ENCODE measurements at regions of chr2 and their contacts with region 1.

Region 1: GRCh38 chr2:186485871-186486650 is at the start of gene ZC3H15:
- DNase-seq: peak; percentile 97
- H3K4me3 ChIP-seq: peak within 1 kb of the TSS; percentile 71 to 98 (median 84)
- H3K27ac ChIP-seq: peak within 1 kb of the TSS; percentile 89
- H3K4me1 ChIP-seq: peaks cover 19% of the 10 kb centered on the region
- H3K27me3 ChIP-seq: no peaks in the 10 kb centered on the region
- CTCF ChIP-seq: no peak
- POLR2A ChIP-seq: peak; percentile 95
- total RNA-seq, gene ZC3H15: 64.5 and 65.1 TPM in 2 replicates

Region 2: GRCh38 chr2:186129767-186130581 is 356.1 kb before region 1 on chr2:
- CTCF ChIA-PET with region 1: no interaction called
- POLR2A ChIA-PET with region 1: no interaction called
- dilution Hi-C with region 1: no loop called
- intact Hi-C with region 1: loop called (anchors 5 kb)
- DNase-seq: peak; percentile 90
- H3K4me3 ChIP-seq: no peak overlapping the region
- H3K27ac ChIP-seq: peak overlapping the region; percentile 75
- H3K4me1 ChIP-seq: peaks cover 29% of the 10 kb centered on the region
- H3K27me3 ChIP-seq: no peaks in the 10 kb centered on the region
- CTCF ChIP-seq: no peak
- POLR2A ChIP-seq: no peak

Region 3: GRCh38 chr2:186205254-186205911 is 280.7 kb before region 1 on chr2:
- CTCF ChIA-PET with region 1: no interaction called
- POLR2A ChIA-PET with region 1: no interaction called
- dilution Hi-C with region 1: no loop called
- intact Hi-C with region 1: no loop called
- DNase-seq: no peak
- H3K4me3 ChIP-seq: no peak overlapping the region
- H3K27ac ChIP-seq: no peak overlapping the region
- H3K4me1 ChIP-seq: no peaks in the 10 kb centered on the region
- H3K27me3 ChIP-seq: no peaks in the 10 kb centered on the region
- CTCF ChIP-seq: no peak
- POLR2A ChIP-seq: no peak

Region 4: GRCh38 chr2:186399082-186399644 is 86.9 kb before region 1 on chr2:
- CTCF ChIA-PET with region 1: no interaction called
- POLR2A ChIA-PET with region 1: no interaction called
- dilution Hi-C with region 1: no loop called
- intact Hi-C with region 1: no loop called
- DNase-seq: no peak
- H3K4me3 ChIP-seq: no peak overlapping the region
- H3K27ac ChIP-seq: no peak overlapping the region
- H3K4me1 ChIP-seq: no peaks in the 10 kb centered on the region
- H3K27me3 ChIP-seq: no peaks in the 10 kb centered on the region
- CTCF ChIP-seq: no peak
- POLR2A ChIP-seq: no peak

Region 5: GRCh38 chr2:186440537-186440936 is 45.5 kb before region 1 on chr2:
- CTCF ChIA-PET with region 1: no interaction called
- POLR2A ChIA-PET with region 1: no interaction called
- dilution Hi-C with region 1: no loop called
- intact Hi-C with region 1: loop called (anchors 1 kb)
- DNase-seq: peak; percentile 78
- H3K4me3 ChIP-seq: peak overlapping the region in 1 of 3 experiments; percentile 23
- H3K27ac ChIP-seq: peak overlapping the region; percentile 44
- H3K4me1 ChIP-seq: peaks cover 9% of the 10 kb centered on the region
- H3K27me3 ChIP-seq: no peaks in the 10 kb centered on the region
- CTCF ChIP-seq: no peak
- POLR2A ChIP-seq: no peak

Region 6: DNA sequence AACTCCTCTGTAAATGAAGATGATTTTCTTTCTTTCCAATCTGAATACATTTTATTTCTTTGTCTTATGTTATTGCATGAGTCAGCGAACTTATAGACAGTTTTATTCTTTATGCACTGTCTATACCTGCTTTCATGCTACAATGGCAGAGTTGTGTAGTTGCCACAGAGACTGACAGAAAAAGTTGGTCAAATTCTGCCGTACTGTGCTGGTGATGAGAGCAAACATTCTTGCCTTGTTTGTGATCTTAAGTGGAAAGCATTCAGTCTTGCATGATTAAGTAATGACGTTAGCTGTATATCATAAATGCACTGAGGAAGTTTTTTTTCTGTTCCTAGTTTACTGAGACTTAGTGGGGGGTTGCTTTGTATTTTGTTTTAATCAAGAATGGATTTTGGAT is 32.9 kb after region 1 on chr2:
- CTCF ChIA-PET with region 1: no interaction called
- POLR2A ChIA-PET with region 1: no interaction called
- dilution Hi-C with region 1: no loop called
- intact Hi-C with region 1: no loop called
- DNase-seq: no peak
- H3K4me3 ChIP-seq: no peak overlapping the region
- H3K27ac ChIP-seq: no peak overlapping the region
- H3K4me1 ChIP-seq: no peaks in the 10 kb centered on the region
- H3K27me3 ChIP-seq: no peaks in the 10 kb centered on the region
- CTCF ChIP-seq: no peak
- POLR2A ChIP-seq: no peak

Region 7: DNA sequence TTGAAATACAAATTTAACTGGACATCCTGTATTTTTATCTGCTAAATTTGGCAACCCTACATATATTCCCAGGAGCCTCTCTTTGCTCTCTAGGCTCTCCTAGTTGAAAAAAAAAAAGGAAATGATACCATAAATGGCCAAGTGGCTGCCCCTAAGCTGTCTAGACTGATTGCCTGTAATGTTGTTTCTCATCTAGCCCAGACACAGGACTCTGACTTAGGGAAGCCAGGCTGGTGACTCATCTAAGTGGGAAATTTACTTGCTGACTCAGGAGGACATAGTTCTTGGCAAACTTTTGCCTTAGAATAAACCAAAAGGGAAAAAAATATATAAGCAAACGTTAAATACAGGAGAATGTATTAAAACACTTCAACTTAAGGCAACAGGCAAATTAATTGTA is 89.2 kb after region 1 on chr2:
- CTCF ChIA-PET with region 1: no interaction called
- POLR2A ChIA-PET with region 1: no interaction called
- dilution Hi-C with region 1: no loop called
- intact Hi-C with region 1: loop called (anchors 2 kb)
- DNase-seq: peak; percentile 98
- H3K4me3 ChIP-seq: no peak overlapping the region
- H3K27ac ChIP-seq: peak overlapping the region; percentile 82
- H3K4me1 ChIP-seq: peaks cover 24% of the 10 kb centered on the region
- H3K27me3 ChIP-seq: no peaks in the 10 kb centered on the region
- CTCF ChIP-seq: no peak
- POLR2A ChIP-seq: no peak

Region 8: DNA sequence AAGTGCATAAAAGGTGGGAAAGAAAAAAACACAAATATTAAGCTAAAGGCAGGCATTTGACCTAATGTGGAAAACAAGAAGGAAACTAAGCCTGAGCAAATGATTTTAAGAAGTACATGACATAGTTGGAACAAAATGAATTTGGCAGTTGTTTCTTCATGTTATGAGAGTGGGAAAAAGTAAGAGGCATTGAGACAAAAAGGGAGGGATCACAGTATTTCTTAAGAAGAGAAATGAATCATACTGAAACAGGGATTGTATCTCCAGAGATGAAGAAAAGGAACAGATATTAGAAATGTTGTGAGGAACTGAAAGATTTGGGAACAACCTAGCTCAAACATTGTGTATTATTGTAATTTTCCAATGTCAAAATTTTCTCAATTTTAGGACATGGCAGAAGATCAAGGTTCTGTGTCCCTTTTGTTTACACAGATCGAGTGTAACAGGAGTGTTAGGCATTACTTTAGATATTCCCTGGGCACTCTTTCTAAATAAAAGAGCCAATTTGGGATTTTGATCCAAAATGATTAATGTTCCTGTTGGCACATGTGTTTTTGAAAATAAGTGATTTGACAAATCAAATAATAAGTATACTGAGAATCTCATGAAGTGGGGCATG is 863.4 kb after region 1 on chr2:
- CTCF ChIA-PET with region 1: no interaction called
- POLR2A ChIA-PET with region 1: no interaction called
- dilution Hi-C with region 1: no loop called
- intact Hi-C with region 1: no loop called
- DNase-seq: no peak
- H3K4me3 ChIP-seq: no peak overlapping the region
- H3K27ac ChIP-seq: no peak overlapping the region
- H3K4me1 ChIP-seq: peaks cover 8% of the 10 kb centered on the region
- H3K27me3 ChIP-seq: no peaks in the 10 kb centered on the region
- CTCF ChIP-seq: no peak
- POLR2A ChIP-seq: no peak